ENCODE measurements at regions of chr14 and their contacts with region 1.

Region 1: GRCh38 chr14:35404449-35405303 is at the start of gene NFKBIA:
- DNase-seq: peak; percentile 93
- H3K4me3 ChIP-seq: peak within 1 kb of the TSS; percentile 72
- H3K27ac ChIP-seq: peak within 1 kb of the TSS; percentile 99
- H3K4me1 ChIP-seq: peaks cover 11% of the 10 kb centered on the region
- H3K27me3 ChIP-seq: no peaks in the 10 kb centered on the region
- CTCF ChIP-seq: no peak
- total RNA-seq, gene NFKBIA: 78.2 to 125 TPM

Region 2: DNA sequence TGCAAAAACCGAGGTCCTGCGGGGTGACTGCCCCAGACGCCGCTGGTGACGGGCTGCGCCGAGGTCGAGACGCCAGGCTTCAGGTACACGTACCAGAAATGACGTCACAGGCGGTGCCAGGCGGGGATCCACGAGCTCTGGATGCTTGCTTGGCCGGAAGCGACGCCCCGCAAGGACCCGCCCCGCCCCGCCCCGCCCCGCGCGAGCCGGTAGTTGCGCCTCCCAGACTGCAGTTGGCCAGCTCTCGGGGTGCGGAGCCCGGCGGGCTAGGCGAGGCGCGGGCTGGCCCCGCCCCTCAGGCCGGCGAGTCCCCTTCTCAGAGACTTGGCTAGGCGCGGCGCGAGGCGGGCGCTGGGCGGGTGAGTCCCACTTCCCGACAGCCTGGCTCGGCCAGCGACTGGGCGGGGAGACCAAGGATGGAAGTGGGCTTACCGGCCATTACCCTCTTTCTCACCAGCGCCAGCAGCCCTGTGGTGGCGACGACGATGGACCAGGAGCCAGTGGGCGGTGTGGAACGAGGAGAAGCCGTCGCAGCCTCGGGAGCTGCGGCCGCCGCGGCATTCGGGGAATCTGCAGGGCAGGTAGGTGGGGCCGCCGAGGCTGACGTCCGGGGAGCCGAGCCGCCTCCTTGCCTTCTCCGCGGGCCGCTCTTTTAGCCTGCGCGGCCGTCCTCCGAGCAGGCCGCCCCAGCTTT is 358.5 kb before region 1 on chr14 and contains the start of gene FAM177A1:
- intact Hi-C with region 1: loop called (anchors 10 kb)
- DNase-seq: peak; percentile 99
- H3K4me3 ChIP-seq: peak within 1 kb of the TSS; percentile 75
- H3K27ac ChIP-seq: peak within 1 kb of the TSS; percentile 99
- H3K4me1 ChIP-seq: peaks cover 17% of the 10 kb centered on the region
- H3K27me3 ChIP-seq: no peaks in the 10 kb centered on the region
- CTCF ChIP-seq: no peak
- total RNA-seq, gene FAM177A1: 114 to 153 TPM

Region 3: DNA sequence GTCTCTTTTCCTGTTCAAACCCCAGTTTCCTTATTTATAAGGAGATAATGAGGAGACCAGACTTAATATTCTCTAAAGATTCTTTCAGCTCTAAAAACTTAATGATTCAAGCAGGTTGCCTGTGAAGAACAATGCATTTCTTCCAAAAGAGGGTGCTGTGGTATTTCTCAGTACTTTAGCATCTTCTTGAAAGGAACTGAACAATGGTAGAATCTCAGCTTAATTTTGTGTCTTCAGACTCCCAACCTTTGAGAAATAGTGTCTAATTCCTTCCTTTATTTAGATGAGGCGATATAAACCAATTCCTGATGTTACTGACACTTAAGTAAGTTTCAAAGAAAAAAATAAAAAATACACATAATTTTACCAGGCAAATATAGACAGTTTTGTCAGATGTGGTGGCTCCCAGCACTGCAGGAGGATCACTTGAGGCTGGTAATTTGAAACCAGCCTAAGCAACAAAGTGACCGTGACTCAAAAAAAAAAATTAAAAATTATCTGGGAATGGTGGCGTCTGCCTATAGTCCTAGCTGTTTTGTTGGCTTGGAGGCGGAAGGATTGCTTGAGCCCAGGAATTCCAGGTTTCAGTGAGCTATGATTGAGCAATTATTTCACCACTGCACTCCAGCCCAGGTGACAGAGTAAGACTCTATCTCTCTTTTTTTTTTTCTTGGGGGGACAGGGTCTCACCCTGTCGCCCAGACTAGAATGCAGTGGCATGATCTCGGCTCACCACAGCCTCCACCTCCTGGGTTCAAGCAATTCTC is 189.4 kb before region 1 on chr14:
- intact Hi-C with region 1: loop called (anchors 5 kb)
- DNase-seq: no peak
- H3K4me3 ChIP-seq: no peak overlapping the region
- H3K27ac ChIP-seq: no peak overlapping the region
- H3K4me1 ChIP-seq: no peaks in the 10 kb centered on the region
- H3K27me3 ChIP-seq: no peaks in the 10 kb centered on the region
- CTCF ChIP-seq: no peak

Region 4: GRCh38 chr14:35292051-35292769 is 112.5 kb before region 1 on chr14 and contains the start of gene PSMA6:
- intact Hi-C with region 1: loop called (anchors 2 kb)
- DNase-seq: peak; percentile 100
- H3K4me3 ChIP-seq: peak within 1 kb of the TSS; percentile 54
- H3K27ac ChIP-seq: peak within 1 kb of the TSS; percentile 83
- H3K4me1 ChIP-seq: peaks cover 19% of the 10 kb centered on the region
- H3K27me3 ChIP-seq: no peaks in the 10 kb centered on the region
- CTCF ChIP-seq: no peak
- total RNA-seq, gene PSMA6: 178 to 197 TPM

Region 5: DNA sequence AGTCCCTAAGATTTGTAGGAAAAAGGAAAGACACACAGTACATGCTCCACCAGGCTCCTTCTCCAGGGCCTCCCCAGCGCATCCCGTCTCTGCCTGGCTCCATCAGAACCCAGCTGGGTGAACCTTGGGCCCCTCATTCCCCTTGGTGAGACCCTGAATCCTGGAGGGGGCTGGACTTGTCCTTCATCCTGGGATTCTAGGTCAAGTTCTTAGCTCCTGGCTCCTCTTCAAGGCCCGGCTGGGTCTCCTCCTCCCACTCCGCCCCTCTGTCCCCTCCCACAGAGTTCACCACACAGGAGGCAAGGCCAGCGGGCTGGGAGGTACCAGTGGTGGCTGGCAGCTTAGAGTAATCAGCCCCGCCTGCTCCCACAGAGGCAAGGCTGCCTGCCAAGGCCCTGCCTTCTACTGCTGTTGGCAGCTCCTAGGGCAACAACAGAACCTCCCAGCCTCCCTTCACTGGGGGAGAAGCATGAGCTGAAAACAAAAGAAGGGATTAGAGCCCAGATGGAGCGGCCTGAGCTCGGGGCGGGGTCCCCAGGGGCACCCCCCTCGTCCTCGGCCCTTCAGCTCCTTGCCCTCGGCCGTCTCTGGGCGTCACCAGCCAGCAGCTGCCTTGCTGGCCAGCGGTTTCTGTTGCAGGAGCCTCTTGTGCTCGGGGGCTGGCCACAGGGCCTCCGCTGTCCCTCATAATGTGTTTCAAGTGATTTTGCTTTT is 63.1 kb before region 1 on chr14:
- intact Hi-C with region 1: loop called (anchors 5 kb)
- DNase-seq: peak; percentile 98
- H3K4me3 ChIP-seq: no peak overlapping the region
- H3K27ac ChIP-seq: peak overlapping the region; percentile 89
- H3K4me1 ChIP-seq: peaks cover 31% of the 10 kb centered on the region
- H3K27me3 ChIP-seq: no peaks in the 10 kb centered on the region
- CTCF ChIP-seq: no peak

Region 6: GRCh38 chr14:35829449-35829848 is 424.8 kb after region 1 on chr14:
- intact Hi-C with region 1: no loop called
- DNase-seq: no peak
- H3K4me3 ChIP-seq: no peak overlapping the region
- H3K27ac ChIP-seq: no peak overlapping the region
- H3K4me1 ChIP-seq: peaks cover 4% of the 10 kb centered on the region
- H3K27me3 ChIP-seq: no peaks in the 10 kb centered on the region
- CTCF ChIP-seq: no peak